H1 (cell line): ENCODE measurements at regions of chr5 and their contacts with region 1.

Region 1: GRCh38 chr5:148374692-148375360 is 8.9 kb upstream of the FBXO38 start:
- DNase-seq: peak; percentile 29 to 49
- H3K4me3 ChIP-seq: no peak overlapping the region
- H3K27ac ChIP-seq: no peak overlapping the region
- H3K4me1 ChIP-seq: no peaks in the 10 kb centered on the region
- H3K27me3 ChIP-seq: no peaks in the 10 kb centered on the region
- CTCF ChIP-seq: peak in 2 of 3 experiments; percentile 81 to 87; a peak in 3 of 4 replicates
- EP300 ChIP-seq: no peak
- POLR2A ChIP-seq: no peak
- RAD21 ChIP-seq: peak; percentile 89 to 92

Region 2: DNA sequence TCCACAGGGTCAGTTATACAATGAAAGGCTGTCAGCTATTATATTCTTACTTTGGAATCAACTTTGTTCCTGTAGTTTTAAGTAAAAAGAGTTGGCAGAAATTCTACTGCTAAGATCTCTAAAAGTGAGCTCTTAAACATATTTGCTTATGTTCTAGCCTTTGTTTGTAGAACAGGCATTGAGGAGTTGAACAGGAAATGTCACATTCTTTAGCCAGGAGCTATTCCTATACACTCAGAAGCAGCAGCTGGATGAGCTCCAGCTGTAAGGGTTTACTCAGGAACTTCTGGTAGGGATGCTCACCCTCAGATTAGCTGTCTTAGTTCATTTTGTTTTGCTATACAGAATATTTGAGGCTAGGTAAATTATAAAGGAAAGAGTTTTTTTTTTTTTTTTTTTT is 228.9 kb before region 1 on chr5:
- CTCF ChIA-PET with region 1: no interaction called
- POLR2A ChIA-PET with region 1: no interaction called
- DNase-seq: no peak
- H3K4me3 ChIP-seq: no peak overlapping the region
- H3K27ac ChIP-seq: no peak overlapping the region
- H3K4me1 ChIP-seq: no peaks in the 10 kb centered on the region
- H3K27me3 ChIP-seq: peaks cover 0 to under 1% (median 0%) of the 10 kb centered on the region in 4 experiments; a peak in 1 of 7 replicates
- CTCF ChIP-seq: no peak
- EP300 ChIP-seq: no peak
- POLR2A ChIP-seq: no peak
- RAD21 ChIP-seq: no peak

Region 3: GRCh38 chr5:148179234-148179824 is 195.5 kb before region 1 on chr5:
- CTCF ChIA-PET with region 1: interaction called, 35 read pairs
- POLR2A ChIA-PET with region 1: no interaction called
- DNase-seq: no peak
- H3K4me3 ChIP-seq: no peak overlapping the region
- H3K27ac ChIP-seq: no peak overlapping the region
- H3K4me1 ChIP-seq: no peaks in the 10 kb centered on the region
- H3K27me3 ChIP-seq: no peaks in the 10 kb centered on the region
- CTCF ChIP-seq: peak in 2 of 3 experiments; percentile 68 to 74; a peak in 3 of 4 replicates
- EP300 ChIP-seq: no peak
- POLR2A ChIP-seq: no peak
- RAD21 ChIP-seq: peak; percentile 90 to 93

Region 4: DNA sequence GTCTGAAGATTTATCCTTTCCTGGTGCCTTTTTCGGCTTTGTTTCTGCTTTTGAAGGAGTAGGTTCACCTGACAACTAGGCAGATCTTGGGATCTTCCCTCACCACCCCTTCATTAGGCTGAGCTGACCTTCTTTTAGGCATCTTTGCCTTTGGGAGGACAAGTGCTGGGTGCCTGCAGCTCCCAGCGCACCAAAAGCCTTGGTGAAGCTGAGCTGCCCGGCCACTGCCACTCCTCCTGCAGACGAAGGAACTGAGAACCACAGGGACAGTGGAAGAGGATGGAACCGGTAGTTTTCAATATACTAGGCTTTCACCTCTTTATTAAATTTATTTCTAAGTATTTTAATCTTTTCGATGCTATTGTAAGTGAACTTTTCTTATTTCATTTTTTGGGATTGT is 153.3 kb before region 1 on chr5:
- CTCF ChIA-PET with region 1: no interaction called
- POLR2A ChIA-PET with region 1: no interaction called
- DNase-seq: no peak
- H3K4me3 ChIP-seq: no peak overlapping the region
- H3K27ac ChIP-seq: no peak overlapping the region
- H3K4me1 ChIP-seq: no peaks in the 10 kb centered on the region
- H3K27me3 ChIP-seq: no peaks in the 10 kb centered on the region
- CTCF ChIP-seq: no peak
- EP300 ChIP-seq: no peak
- POLR2A ChIP-seq: no peak
- RAD21 ChIP-seq: no peak

Region 5: GRCh38 chr5:148290271-148291195 is 84.3 kb before region 1 on chr5:
- CTCF ChIA-PET with region 1: interaction called, 53 read pairs
- POLR2A ChIA-PET with region 1: no interaction called
- DNase-seq: no peak
- H3K4me3 ChIP-seq: no peak overlapping the region
- H3K27ac ChIP-seq: no peak overlapping the region
- H3K4me1 ChIP-seq: 0 out of 7 replicates have a peak, but pooled peaks cover 0 to 3% (median 0%) of the 10 kb centered on the region in 4 experiments
- H3K27me3 ChIP-seq: no peaks in the 10 kb centered on the region
- CTCF ChIP-seq: peak in 2 of 3 experiments; percentile 45 to 57; a peak in 2 of 4 replicates
- EP300 ChIP-seq: no peak
- POLR2A ChIP-seq: no peak
- RAD21 ChIP-seq: peak; percentile 73 to 77

Region 6: DNA sequence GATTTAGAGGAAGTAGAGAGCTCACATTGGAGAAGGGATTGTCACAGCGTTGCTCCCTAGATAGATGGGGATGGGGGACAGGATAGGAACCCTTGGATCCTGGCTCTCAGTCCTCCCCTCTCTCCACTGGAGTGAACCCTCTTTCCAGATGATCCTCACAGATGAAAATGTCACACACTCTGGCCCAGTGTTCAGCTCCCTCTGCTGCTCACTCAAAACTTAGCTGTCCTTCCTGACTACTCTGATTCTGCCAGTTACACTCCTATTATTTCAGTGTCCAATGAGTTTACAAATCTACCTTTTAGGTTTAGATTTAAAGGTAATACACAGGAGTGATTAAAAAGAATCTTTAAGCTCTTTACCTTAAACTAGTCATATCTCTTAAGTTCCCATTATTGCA is 68.4 kb before region 1 on chr5:
- CTCF ChIA-PET with region 1: interaction called, 13 read pairs
- POLR2A ChIA-PET with region 1: no interaction called
- DNase-seq: no peak
- H3K4me3 ChIP-seq: no peak overlapping the region
- H3K27ac ChIP-seq: no peak overlapping the region
- H3K4me1 ChIP-seq: no peaks in the 10 kb centered on the region
- H3K27me3 ChIP-seq: peaks cover 0 to under 1% (median 0%) of the 10 kb centered on the region in 4 experiments; a peak in 1 of 7 replicates
- CTCF ChIP-seq: peak in 2 of 3 experiments; percentile 11 to 12; a peak in 2 of 4 replicates
- EP300 ChIP-seq: no peak
- POLR2A ChIP-seq: no peak
- RAD21 ChIP-seq: peak; percentile 28 to 35

Region 7: DNA sequence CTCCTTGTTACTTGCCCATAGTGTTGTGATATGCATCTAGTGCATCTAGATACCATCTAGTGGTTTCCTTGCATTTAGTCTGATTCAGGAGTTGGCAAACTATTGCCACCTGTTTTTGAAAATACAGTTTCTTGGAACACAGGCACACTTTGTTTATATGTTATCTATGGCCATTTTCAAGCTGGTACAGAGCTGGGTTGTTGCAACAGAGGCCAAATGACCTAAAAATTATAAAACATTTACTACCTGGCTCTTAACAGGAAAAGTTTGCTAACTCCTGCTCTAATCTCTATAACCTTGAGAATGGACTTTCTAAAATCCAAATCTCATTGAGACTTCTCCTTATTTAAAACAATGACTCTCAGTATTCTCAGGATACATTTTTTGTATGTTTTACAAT is 10.5 kb before region 1 on chr5:
- CTCF ChIA-PET with region 1: interaction called, 15 read pairs
- POLR2A ChIA-PET with region 1: no interaction called
- DNase-seq: no peak
- H3K4me3 ChIP-seq: no peak overlapping the region
- H3K27ac ChIP-seq: no peak overlapping the region
- H3K4me1 ChIP-seq: no peaks in the 10 kb centered on the region
- H3K27me3 ChIP-seq: no peaks in the 10 kb centered on the region
- CTCF ChIP-seq: no peak
- EP300 ChIP-seq: no peak
- POLR2A ChIP-seq: no peak
- RAD21 ChIP-seq: no peak

Region 8: GRCh38 chr5:148397968-148398597 is 23.3 kb after region 1 on chr5:
- CTCF ChIA-PET with region 1: interaction called, 13 read pairs
- POLR2A ChIA-PET with region 1: interaction called, 4 read pairs
- DNase-seq: peak; percentile 48 to 61
- H3K4me3 ChIP-seq: peak overlapping the region in 1 of 4 experiments; percentile 27; a peak in 1 of 8 replicates
- H3K27ac ChIP-seq: peak overlapping the region; percentile 58
- H3K4me1 ChIP-seq: peaks cover 0 to 17% (median 6%) of the 10 kb centered on the region in 4 experiments; a peak in 4 of 7 replicates
- H3K27me3 ChIP-seq: no peaks in the 10 kb centered on the region
- CTCF ChIP-seq: no peak
- EP300 ChIP-seq: peak in 1 of 2 experiments; percentile 73; a peak in 1 of 3 replicates
- POLR2A ChIP-seq: peak in 1 of 2 experiments; percentile 48; a peak in 1 of 3 replicates
- RAD21 ChIP-seq: 0 out of 4 replicates have a peak, but pooled peaks of 1 of the 2 experiments have one; percentile 18

Region 9: DNA sequence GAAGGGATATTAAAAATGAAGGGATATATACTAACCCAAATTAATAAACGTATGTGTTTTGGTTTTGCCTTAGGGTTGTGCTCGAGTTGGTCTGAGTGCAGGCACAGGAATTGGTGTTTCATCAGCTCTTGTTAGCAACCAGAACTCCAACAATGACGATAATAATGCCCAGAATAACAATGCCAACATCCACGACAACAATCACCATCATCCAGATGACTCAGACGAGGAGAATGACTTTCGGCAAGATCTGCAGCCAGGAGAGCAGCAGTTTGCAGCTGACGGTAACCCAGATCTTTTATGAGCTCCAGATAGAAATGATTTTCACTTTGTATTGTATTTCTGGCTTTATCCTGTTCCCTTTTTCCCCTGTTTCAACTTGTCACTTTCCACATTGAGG is 42.1 kb after region 1 on chr5:
- CTCF ChIA-PET with region 1: no interaction called
- POLR2A ChIA-PET with region 1: no interaction called
- DNase-seq: no peak
- H3K4me3 ChIP-seq: no peak overlapping the region
- H3K27ac ChIP-seq: no peak overlapping the region
- H3K4me1 ChIP-seq: no peaks in the 10 kb centered on the region
- H3K27me3 ChIP-seq: no peaks in the 10 kb centered on the region
- CTCF ChIP-seq: no peak
- EP300 ChIP-seq: no peak
- POLR2A ChIP-seq: no peak
- RAD21 ChIP-seq: no peak

Region 10: GRCh38 chr5:148559461-148559860 is 184.6 kb after region 1 on chr5:
- CTCF ChIA-PET with region 1: no interaction called
- POLR2A ChIA-PET with region 1: no interaction called
- DNase-seq: no peak
- H3K4me3 ChIP-seq: no peak overlapping the region
- H3K27ac ChIP-seq: no peak overlapping the region
- H3K4me1 ChIP-seq: peaks cover 0 to 6% (median 1%) of the 10 kb centered on the region in 4 experiments; a peak in 3 of 7 replicates
- H3K27me3 ChIP-seq: no peaks in the 10 kb centered on the region
- CTCF ChIP-seq: no peak
- EP300 ChIP-seq: no peak
- POLR2A ChIP-seq: no peak
- RAD21 ChIP-seq: no peak